ENCODE measurements at regions of chr1 and their contacts with region 1.

Region 1: DNA sequence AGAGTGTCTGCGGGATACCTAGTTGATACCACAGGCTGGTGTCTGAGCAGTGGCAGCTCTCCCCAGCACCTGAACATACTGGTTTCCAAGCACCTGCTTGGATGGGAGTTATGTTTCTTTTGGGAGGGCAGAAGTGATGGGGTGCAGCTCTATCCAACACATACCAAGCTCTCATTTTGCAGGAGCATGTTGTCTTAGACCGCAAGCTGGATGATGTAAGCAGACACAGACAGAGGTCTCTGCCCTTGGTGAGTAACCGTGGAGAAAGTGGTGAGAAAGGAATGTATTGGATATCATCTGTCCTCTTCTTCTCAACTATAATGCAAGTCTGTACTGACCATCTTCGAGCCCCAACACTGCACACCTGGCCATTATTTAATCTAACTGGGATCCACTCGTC is 37.4 kb downstream of the ZNF496 start:
- DNase-seq: peak; percentile 94
- ATAC-seq: peak; percentile 81
- H3K4me3 ChIP-seq: no peak overlapping the region
- H3K27ac ChIP-seq: no peak overlapping the region
- H3K4me1 ChIP-seq: peaks cover 10% of the 10 kb centered on the region
- H3K27me3 ChIP-seq: no peaks in the 10 kb centered on the region
- CTCF ChIP-seq: no peak
- POLR2A ChIP-seq: no peak
- RAD21 ChIP-seq: no peak

Region 2: GRCh38 chr1:247103859-247104591 is 190.3 kb before region 1 on chr1 and contains the start of gene ZNF669:
- CTCF ChIA-PET with region 1: no interaction called
- POLR2A ChIA-PET with region 1: no interaction called
- dilution Hi-C with region 1: no loop called
- in situ Hi-C with region 1: no loop called
- intact Hi-C with region 1: loop called (anchors 10 kb)
- DNase-seq: peak; percentile 97
- ATAC-seq: peak; percentile 98
- H3K4me3 ChIP-seq: peak within 1 kb of the TSS; percentile 92
- H3K27ac ChIP-seq: peak within 1 kb of the TSS; percentile 83
- H3K4me1 ChIP-seq: no peaks in the 10 kb centered on the region
- H3K27me3 ChIP-seq: no peaks in the 10 kb centered on the region
- CTCF ChIP-seq: no peak
- POLR2A ChIP-seq: peak; percentile 95
- RAD21 ChIP-seq: no peak
- total RNA-seq, gene ZNF669: 10.8 and 14.2 TPM in 2 replicates

Region 3: DNA sequence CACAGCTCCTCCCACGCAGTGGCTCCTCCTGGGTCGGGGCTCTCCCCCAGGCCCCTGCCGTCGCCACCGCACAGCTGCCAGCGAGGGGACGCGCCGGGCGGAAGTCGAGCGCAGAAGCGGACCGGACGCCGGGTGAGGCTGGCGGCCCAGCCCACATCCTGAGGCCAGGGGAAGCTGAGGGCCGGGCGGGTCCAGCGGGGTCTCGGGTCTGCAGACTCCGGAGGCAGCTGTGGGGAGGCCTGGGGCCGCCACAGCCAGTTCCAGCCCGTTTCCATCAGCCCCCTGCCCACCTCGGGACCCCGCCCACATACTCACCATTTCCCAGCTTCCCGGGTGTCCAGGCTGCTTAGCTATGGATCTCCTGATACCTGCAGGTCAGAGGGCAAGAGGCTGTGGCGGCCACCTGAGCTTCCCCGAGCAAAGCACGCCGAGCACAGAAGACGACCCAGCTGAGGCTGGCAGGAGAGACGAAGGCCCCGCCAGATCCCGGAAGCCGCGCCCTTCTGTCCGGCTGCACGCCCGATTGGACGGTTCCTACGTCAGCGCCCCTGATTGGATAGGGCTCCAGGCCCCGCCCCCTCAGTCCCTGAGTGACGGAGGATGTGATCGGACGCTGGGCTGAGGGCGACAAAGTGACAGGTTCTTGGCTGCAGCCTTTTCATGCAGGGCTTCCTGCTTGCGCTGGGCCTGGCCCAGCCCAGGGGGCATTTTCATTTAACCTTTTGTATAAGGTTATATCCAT is 83.7 kb before region 1 on chr1:
- CTCF ChIA-PET with region 1: no interaction called
- POLR2A ChIA-PET with region 1: no interaction called
- dilution Hi-C with region 1: no loop called
- in situ Hi-C with region 1: no loop called
- intact Hi-C with region 1: no loop called
- DNase-seq: peak; percentile 85
- ATAC-seq: peak; percentile 100
- H3K4me3 ChIP-seq: peak overlapping the region; percentile 79
- H3K27ac ChIP-seq: peak overlapping the region; percentile 51
- H3K4me1 ChIP-seq: peaks cover 3% of the 10 kb centered on the region
- H3K27me3 ChIP-seq: no peaks in the 10 kb centered on the region
- CTCF ChIP-seq: no peak
- POLR2A ChIP-seq: peak; percentile 83
- RAD21 ChIP-seq: no peak